Activated CD4-positive, alpha-beta T cell treated with anti-CD3 and anti-CD28 coated beads for 36 hours (primary cell): ENCODE measurements at regions of chr9 and their contacts with region 1.

Region 1: DNA sequence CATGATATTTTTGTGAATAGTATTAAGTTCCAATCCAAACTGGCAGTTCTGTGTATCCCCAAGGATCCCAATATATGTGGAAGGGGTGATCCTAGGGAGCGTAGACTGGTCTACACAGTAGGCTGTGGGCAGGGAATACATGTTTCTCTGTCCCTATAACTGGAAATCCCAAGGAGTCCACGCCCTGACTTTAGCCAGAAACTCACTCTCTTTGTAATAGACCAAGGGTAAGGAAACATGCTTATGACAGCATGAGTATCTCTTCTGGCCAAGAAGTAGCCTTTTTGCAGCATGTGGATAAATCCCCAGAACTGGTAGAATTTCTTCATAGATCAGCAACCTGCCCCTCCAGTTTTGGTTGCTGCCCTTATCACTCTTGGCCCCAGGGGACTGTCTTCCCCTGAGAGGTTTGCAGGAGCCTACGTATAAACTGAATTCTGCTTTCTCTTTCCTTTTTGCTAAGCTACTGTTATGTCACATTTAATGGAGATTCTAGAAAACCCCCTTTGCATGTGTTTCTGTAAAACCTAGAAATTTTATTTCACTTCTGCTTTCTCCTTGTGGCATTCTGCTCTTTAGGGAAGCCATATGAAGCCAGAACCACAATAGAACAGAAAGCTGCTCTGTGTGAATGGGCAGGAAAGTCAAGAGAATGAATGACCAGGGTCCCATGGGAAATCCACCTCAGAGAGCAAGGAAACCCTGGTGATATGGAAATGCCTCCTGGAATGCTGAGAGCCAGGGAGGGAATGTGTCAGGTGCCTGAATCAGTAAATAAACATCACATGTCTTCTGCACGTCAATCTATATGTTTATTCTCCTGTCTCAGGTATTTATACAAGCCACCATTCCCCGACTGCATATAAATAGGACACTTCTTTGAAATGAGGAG is 3.5 kb downstream of the IFNA2 start:
- DNase-seq: peak; percentile 18
- ATAC-seq: peak; percentile 90
- H3K4me3 Mint-ChIP-seq: no peak overlapping the region
- H3K27ac Mint-ChIP-seq: no peak overlapping the region
- H3K4me1 Mint-ChIP-seq: peaks cover 13% of the 10 kb centered on the region
- H3K27me3 Mint-ChIP-seq: peaks cover 37% of the 10 kb centered on the region

Region 2: GRCh38 chr9:21357479-21358460 is 23.9 kb before region 1 on chr9:
- CTCF ChIA-PET with region 1: no interaction called
- POLR2A ChIA-PET with region 1: no interaction called
- intact Hi-C with region 1: loop called in 1 of 2 experiments (anchors 1 kb)
- DNase-seq: peak; percentile 40
- ATAC-seq: peak; percentile 94
- H3K4me3 Mint-ChIP-seq: peak overlapping the region; percentile 35
- H3K27ac Mint-ChIP-seq: peak overlapping the region; percentile 70
- H3K4me1 Mint-ChIP-seq: peaks cover 19% of the 10 kb centered on the region
- H3K27me3 Mint-ChIP-seq: peaks cover 18% of the 10 kb centered on the region

Region 3: DNA sequence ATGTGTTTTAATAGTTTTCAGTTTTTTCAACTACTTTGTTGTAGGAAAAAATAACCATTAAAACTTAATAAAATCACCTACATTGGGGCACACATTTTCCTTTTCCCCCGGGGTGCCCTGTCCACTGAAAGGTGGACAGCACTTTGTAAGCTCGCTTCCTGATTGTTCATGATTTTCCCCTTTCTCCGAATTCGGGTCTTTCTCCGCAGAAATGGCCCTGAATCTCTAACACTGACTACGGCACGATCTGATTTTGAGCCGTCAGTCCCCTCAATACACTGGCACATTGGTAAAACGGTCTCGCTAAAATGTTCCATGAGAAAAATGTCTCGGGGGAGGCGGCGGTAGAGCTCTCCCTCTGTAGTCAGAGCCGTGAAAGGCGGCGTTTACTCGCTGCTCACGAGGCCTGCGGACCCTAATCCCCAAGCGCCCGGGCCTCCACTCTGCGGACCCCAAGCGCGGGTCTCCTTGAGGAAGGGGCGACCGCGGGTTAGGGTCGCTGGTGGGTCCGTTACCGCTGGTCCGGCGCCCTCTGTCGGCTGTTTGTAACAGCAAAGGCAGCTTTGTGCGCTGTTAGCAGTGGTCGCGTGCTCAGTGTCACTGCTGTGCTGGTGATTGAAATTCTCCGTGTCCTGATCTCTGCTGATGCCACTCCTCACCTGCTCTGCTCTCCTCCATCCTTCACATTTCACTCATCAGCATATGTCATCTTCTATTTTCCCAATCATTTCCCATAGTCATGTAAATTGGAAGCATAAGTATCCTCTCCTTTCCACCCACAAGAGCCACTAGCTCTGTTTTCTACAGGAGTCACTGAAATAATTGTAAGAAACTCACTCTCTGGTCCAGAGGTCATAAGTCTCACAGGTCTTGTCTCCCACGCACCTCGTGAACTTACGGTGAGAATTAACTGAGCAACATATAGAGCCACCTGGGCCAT is 14.4 kb after region 1 on chr9:
- CTCF ChIA-PET with region 1: interaction called, 18 read pairs
- POLR2A ChIA-PET with region 1: no interaction called
- intact Hi-C with region 1: no loop called
- DNase-seq: peak; percentile 78
- ATAC-seq: peak; percentile 74
- H3K4me3 Mint-ChIP-seq: peak overlapping the region; percentile 52
- H3K27ac Mint-ChIP-seq: peak overlapping the region; percentile 66
- H3K4me1 Mint-ChIP-seq: peaks cover 15% of the 10 kb centered on the region
- H3K27me3 Mint-ChIP-seq: peaks cover 47% of the 10 kb centered on the region